CD4-positive, alpha-beta T cell (primary cell): ENCODE measurements at regions of chr4 and their contacts with region 1.

Region 1: DNA sequence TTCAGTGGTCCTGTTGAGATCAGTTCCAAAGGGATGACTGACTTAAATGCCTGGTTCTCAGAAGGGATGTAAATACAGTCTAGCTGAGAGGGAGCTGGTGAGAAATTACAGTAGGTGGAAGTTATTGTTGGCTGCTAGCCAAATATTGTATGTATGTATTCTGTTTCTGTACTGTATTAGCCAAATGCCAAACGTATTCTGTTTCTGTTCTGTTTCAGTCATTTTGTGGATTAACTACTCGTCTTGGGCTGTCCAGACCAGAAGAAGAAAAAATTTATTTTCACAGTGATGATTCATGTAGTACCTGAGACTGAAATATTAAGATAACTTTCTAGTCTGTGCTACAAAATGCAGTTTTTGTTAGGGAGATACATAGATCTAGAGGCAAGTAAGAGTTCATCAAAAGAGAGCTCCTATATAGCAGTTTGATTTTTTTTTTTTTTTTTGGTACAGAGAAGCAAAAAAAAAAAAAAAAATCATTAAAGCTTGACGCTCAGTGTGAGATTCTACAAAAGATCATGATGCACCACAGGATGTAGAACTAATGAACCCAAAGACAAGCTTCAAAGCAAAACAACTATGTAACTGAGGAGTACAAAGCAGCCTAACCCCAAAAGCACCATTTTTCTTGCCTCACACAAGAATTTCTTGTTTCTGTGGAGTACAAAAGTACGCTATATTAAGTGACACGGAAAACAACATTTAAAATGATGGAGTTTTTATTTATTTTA is 54.8 kb downstream of the CASP6 start:
- DNase-seq: peak in 5 of 14 experiments; percentile 25 to 88 (median 83)
- ATAC-seq: peak; percentile 86
- H3K4me3 ChIP-seq: peak overlapping the region; percentile 22
- H3K4me3 Mint-ChIP-seq: peak overlapping the region; percentile 85
- H3K27ac ChIP-seq: peak overlapping the region; percentile 70 to 74
- H3K27ac Mint-ChIP-seq: no peak overlapping the region
- H3K4me1 ChIP-seq: peaks cover 49% of the 10 kb centered on the region
- H3K4me1 Mint-ChIP-seq: no peaks in the 10 kb centered on the region
- H3K27me3 ChIP-seq: no peaks in the 10 kb centered on the region
- H3K27me3 Mint-ChIP-seq: no peaks in the 10 kb centered on the region
- CTCF ChIP-seq: no peak

Region 2: GRCh38 chr4:107838861-107839565 is 1809.4 kb before region 1 on chr4:
- CTCF ChIA-PET with region 1: no interaction called
- POLR2A ChIA-PET with region 1: no interaction called
- intact Hi-C with region 1: no loop called
- DNase-seq: peak in 2 of 14 experiments; percentile 22 to 24
- ATAC-seq: no peak
- H3K4me3 ChIP-seq: no peak overlapping the region
- H3K4me3 Mint-ChIP-seq: no peak overlapping the region
- H3K27ac ChIP-seq: no peak overlapping the region
- H3K27ac Mint-ChIP-seq: no peak overlapping the region
- H3K4me1 ChIP-seq: no peaks in the 10 kb centered on the region
- H3K4me1 Mint-ChIP-seq: no peaks in the 10 kb centered on the region
- H3K27me3 ChIP-seq: peaks cover 0 to 3% of the 10 kb centered on the region in 2 experiments
- H3K27me3 Mint-ChIP-seq: peaks cover 7% of the 10 kb centered on the region
- CTCF ChIP-seq: no peak

Region 3: GRCh38 chr4:108774809-108775530 is 873.5 kb before region 1 on chr4:
- CTCF ChIA-PET with region 1: no interaction called
- POLR2A ChIA-PET with region 1: no interaction called
- intact Hi-C with region 1: no loop called
- DNase-seq: no peak
- ATAC-seq: no peak
- H3K4me3 ChIP-seq: no peak overlapping the region
- H3K4me3 Mint-ChIP-seq: no peak overlapping the region
- H3K27ac ChIP-seq: no peak overlapping the region
- H3K27ac Mint-ChIP-seq: no peak overlapping the region
- H3K4me1 ChIP-seq: no peaks in the 10 kb centered on the region
- H3K4me1 Mint-ChIP-seq: no peaks in the 10 kb centered on the region
- H3K27me3 ChIP-seq: peaks cover 5 to 9% of the 10 kb centered on the region in 2 experiments
- H3K27me3 Mint-ChIP-seq: peaks cover 19% of the 10 kb centered on the region
- CTCF ChIP-seq: no peak

Region 4: DNA sequence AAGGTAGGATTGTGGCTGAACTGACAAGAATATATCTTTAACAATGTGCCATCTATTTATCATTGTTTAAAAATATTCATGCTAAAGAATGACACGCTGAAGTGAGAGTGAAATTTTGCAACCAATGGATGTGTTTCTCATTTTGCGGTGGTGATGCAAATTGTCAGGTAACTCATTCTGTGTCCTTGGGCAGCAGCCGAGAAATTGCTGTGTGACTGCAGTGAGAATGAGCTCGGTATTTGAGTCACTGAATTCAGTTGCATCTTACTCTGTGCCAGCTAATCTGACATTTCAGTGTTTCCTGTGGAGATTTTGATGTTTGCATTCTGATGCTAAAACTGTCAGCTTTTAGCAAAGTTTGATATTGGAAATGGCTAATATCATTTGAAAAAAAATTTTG is 60.3 kb before region 1 on chr4:
- CTCF ChIA-PET with region 1: no interaction called
- POLR2A ChIA-PET with region 1: interaction called, 11 read pairs
- intact Hi-C with region 1: loop called in 1 of 2 experiments (anchors 2 kb)
- DNase-seq: peak in 10 of 14 experiments; percentile 5 to 62 (median 16)
- ATAC-seq: peak; percentile 86
- H3K4me3 ChIP-seq: no peak overlapping the region
- H3K4me3 Mint-ChIP-seq: peak overlapping the region; percentile 30
- H3K27ac ChIP-seq: no peak overlapping the region
- H3K27ac Mint-ChIP-seq: peak overlapping the region; percentile 67
- H3K4me1 ChIP-seq: peaks cover 17% of the 10 kb centered on the region
- H3K4me1 Mint-ChIP-seq: peaks cover 84% of the 10 kb centered on the region
- H3K27me3 ChIP-seq: no peaks in the 10 kb centered on the region
- H3K27me3 Mint-ChIP-seq: no peaks in the 10 kb centered on the region
- CTCF ChIP-seq: no peak

Region 5: GRCh38 chr4:109599046-109599652 is 49.3 kb before region 1 on chr4:
- CTCF ChIA-PET with region 1: no interaction called
- POLR2A ChIA-PET with region 1: interaction called, 11 read pairs
- intact Hi-C with region 1: no loop called
- DNase-seq: no peak
- ATAC-seq: peak; percentile 66
- H3K4me3 ChIP-seq: no peak overlapping the region
- H3K4me3 Mint-ChIP-seq: peak overlapping the region; percentile 64
- H3K27ac ChIP-seq: no peak overlapping the region
- H3K27ac Mint-ChIP-seq: peak overlapping the region; percentile 77
- H3K4me1 ChIP-seq: peaks cover 10% of the 10 kb centered on the region
- H3K4me1 Mint-ChIP-seq: peaks cover 59% of the 10 kb centered on the region
- H3K27me3 ChIP-seq: no peaks in the 10 kb centered on the region
- H3K27me3 Mint-ChIP-seq: no peaks in the 10 kb centered on the region
- CTCF ChIP-seq: no peak

Region 6: DNA sequence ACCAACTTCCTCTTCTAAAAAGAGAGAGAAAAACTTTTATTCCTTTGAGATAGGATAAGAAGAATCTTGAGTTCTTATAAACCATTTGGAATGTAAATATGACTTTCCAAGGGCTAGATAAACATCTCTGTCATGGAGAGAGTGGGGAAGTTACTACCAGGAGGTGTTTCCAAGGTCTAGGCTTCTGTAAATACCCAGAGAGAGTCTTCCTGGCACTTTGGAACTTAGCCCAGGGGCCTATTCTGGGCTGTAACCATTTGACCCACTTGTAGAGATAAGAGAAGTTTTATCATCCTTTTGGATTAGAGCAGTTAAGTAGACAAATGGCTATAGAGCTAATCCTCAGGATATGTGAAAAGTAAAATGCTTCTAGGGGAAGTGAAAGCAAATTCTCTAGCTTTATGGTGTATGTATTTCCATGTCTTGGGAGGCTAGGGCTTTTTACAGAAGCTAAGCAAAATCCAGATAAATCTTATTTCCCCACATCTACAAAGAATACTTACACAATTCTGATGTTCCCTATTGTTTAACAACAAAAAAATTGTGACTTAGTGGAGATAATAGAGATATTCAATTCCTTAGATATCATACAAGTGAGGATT is 37.3 kb before region 1 on chr4:
- CTCF ChIA-PET with region 1: no interaction called
- POLR2A ChIA-PET with region 1: interaction called, 7 read pairs
- intact Hi-C with region 1: loop called (anchors 5 kb)
- DNase-seq: no peak
- ATAC-seq: no peak
- H3K4me3 ChIP-seq: no peak overlapping the region
- H3K4me3 Mint-ChIP-seq: no peak overlapping the region
- H3K27ac ChIP-seq: no peak overlapping the region
- H3K27ac Mint-ChIP-seq: peak overlapping the region; percentile 56
- H3K4me1 ChIP-seq: peaks cover 22% of the 10 kb centered on the region
- H3K4me1 Mint-ChIP-seq: peaks cover 86% of the 10 kb centered on the region
- H3K27me3 ChIP-seq: no peaks in the 10 kb centered on the region
- H3K27me3 Mint-ChIP-seq: no peaks in the 10 kb centered on the region
- CTCF ChIP-seq: no peak

Region 7: GRCh38 chr4:109631532-109632108 is 16.8 kb before region 1 on chr4:
- CTCF ChIA-PET with region 1: interaction called, 4 read pairs
- POLR2A ChIA-PET with region 1: interaction called, 14 read pairs
- intact Hi-C with region 1: loop called in 1 of 2 experiments (anchors 1 kb)
- DNase-seq: peak in 1 of 14 experiments; percentile 2
- ATAC-seq: peak; percentile 56
- H3K4me3 ChIP-seq: no peak overlapping the region
- H3K4me3 Mint-ChIP-seq: peak overlapping the region; percentile 21
- H3K27ac ChIP-seq: no peak overlapping the region
- H3K27ac Mint-ChIP-seq: peak overlapping the region; percentile 76
- H3K4me1 ChIP-seq: peaks cover 12% of the 10 kb centered on the region
- H3K4me1 Mint-ChIP-seq: peaks cover 76% of the 10 kb centered on the region
- H3K27me3 ChIP-seq: no peaks in the 10 kb centered on the region
- H3K27me3 Mint-ChIP-seq: no peaks in the 10 kb centered on the region
- CTCF ChIP-seq: no peak

Region 8: GRCh38 chr4:109658871-109659410 is 10.5 kb after region 1 on chr4:
- CTCF ChIA-PET with region 1: interaction called, 3 read pairs
- POLR2A ChIA-PET with region 1: interaction called, 16 read pairs
- intact Hi-C with region 1: no loop called
- DNase-seq: peak in 5 of 14 experiments; percentile 22 to 59 (median 45)
- ATAC-seq: peak; percentile 78
- H3K4me3 ChIP-seq: no peak overlapping the region
- H3K4me3 Mint-ChIP-seq: no peak overlapping the region
- H3K27ac ChIP-seq: no peak overlapping the region
- H3K27ac Mint-ChIP-seq: no peak overlapping the region
- H3K4me1 ChIP-seq: peaks cover 37% of the 10 kb centered on the region
- H3K4me1 Mint-ChIP-seq: peaks cover 64% of the 10 kb centered on the region
- H3K27me3 ChIP-seq: no peaks in the 10 kb centered on the region
- H3K27me3 Mint-ChIP-seq: no peaks in the 10 kb centered on the region
- CTCF ChIP-seq: peak; percentile 61

Region 9: DNA sequence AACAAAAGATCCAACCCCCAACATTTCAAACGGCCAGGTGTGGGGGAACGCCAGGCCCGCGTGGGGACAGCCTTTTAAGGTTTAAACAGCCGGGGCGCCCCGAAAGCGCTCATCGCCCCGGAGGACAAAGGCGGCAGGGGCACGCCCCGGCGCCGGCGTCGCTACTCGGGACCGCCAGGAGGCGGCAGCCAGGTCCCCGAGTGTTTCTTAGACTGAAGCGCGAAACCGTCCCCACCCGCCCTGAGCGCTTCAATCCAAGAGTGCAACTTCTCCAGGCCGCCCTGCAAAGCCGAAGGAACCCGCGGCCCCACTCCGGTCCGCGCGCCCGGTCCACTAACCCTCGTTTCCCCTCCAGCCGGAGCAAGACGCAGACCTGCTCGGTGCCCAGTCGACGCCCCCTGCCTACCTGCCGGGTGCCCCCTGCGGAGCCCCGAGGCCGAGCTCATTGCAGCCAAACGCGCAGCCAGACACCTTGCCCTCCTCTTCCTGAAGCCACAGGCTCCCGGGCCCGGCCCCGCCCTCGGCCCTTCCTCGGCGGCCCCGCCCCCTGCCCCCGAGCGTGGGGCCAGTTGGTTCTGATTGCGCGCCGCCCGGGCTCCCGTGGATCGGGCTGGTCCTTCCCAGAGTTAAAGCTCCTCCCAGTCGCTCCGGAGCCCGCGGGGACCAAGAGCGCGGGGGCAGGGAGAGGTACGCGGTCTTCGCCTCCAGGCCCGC is 54.7 kb after region 1 on chr4 and contains the start of gene CASP6:
- CTCF ChIA-PET with region 1: interaction called, 4 read pairs
- POLR2A ChIA-PET with region 1: interaction called, 13 read pairs
- intact Hi-C with region 1: no loop called
- DNase-seq: peak; percentile 62 to 90 (median 73)
- ATAC-seq: peak; percentile 90
- H3K4me3 ChIP-seq: peak within 1 kb of the TSS; percentile 80
- H3K4me3 Mint-ChIP-seq: peak within 1 kb of the TSS; percentile 97
- H3K27ac ChIP-seq: peak within 1 kb of the TSS; percentile 39 to 60
- H3K27ac Mint-ChIP-seq: peak within 1 kb of the TSS; percentile 96
- H3K4me1 ChIP-seq: peaks cover 33% of the 10 kb centered on the region
- H3K4me1 Mint-ChIP-seq: peaks cover 50% of the 10 kb centered on the region
- H3K27me3 ChIP-seq: no peaks in the 10 kb centered on the region
- H3K27me3 Mint-ChIP-seq: no peaks in the 10 kb centered on the region
- CTCF ChIP-seq: peak; percentile 78
- total RNA-seq, gene CASP6: 5.4 to 5.5 TPM